ENCODE measurements at regions of chr3 and their contacts with region 1.

Region 1: GRCh38 chr3:17278006-17278405 is 393.3 kb downstream of the PLCL2 start:
- DNase-seq: no peak
- ATAC-seq: no peak
- H3K4me3 ChIP-seq: no peak overlapping the region
- H3K27ac ChIP-seq: no peak overlapping the region
- H3K4me1 ChIP-seq: no peaks in the 10 kb centered on the region
- H3K27me3 ChIP-seq: no peaks in the 10 kb centered on the region

Region 2: GRCh38 chr3:17166369-17166768 is 111.6 kb before region 1 on chr3:
- intact Hi-C with region 1: no loop called
- DNase-seq: no peak
- ATAC-seq: no peak
- H3K4me3 ChIP-seq: no peak overlapping the region
- H3K27ac ChIP-seq: no peak overlapping the region
- H3K4me1 ChIP-seq: peaks cover 5% of the 10 kb centered on the region
- H3K27me3 ChIP-seq: no peaks in the 10 kb centered on the region

Region 3: GRCh38 chr3:17233398-17233800 is 44.6 kb before region 1 on chr3:
- intact Hi-C with region 1: no loop called
- DNase-seq: no peak
- ATAC-seq: peak; percentile 80 to 85
- H3K4me3 ChIP-seq: no peak overlapping the region
- H3K27ac ChIP-seq: no peak overlapping the region
- H3K4me1 ChIP-seq: no peaks in the 10 kb centered on the region
- H3K27me3 ChIP-seq: no peaks in the 10 kb centered on the region

Region 4: DNA sequence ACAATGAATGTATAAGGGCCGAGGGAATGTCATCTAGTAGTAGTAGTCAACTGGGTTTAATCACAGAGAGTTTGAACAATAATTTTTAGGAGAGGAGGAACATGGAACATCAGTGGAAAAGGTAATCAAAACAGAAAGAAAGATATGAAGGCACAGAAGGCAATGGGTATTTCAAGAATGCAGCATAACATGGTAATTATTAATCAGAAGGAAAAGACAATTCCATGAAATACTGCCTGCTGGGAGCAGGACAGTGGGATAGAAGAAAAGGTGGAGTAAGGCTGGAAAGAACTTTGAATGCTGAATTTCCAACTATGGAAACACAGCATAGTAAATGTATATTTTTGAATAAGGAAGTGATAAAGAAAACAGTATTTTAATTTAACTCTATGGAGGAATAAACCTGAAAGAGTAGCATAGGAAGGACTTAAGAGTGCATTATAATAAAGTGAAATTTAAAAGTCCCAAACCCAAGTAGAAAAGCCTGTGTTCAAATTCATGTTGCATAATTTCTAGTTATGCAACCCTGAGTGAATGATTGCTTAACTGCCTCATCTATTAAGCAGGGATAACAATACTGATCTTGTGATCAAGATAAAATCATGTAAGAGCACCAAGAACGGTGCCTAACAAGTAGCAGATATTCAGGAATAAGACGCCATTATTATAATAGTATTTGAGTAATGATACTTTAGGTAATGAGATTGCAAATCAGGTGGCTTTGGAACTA is 106.7 kb after region 1 on chr3:
- intact Hi-C with region 1: loop called in 1 of 4 experiments (anchors 10 kb)
- DNase-seq: no peak
- ATAC-seq: no peak
- H3K4me3 ChIP-seq: no peak overlapping the region
- H3K27ac ChIP-seq: no peak overlapping the region
- H3K4me1 ChIP-seq: no peaks in the 10 kb centered on the region
- H3K27me3 ChIP-seq: no peaks in the 10 kb centered on the region